Heart left ventricle (tissue), 16 donors: ENCODE measurements at regions of chr16 and their contacts with region 1.

Region 1: GRCh38 chr16:24555346-24555877 is 16.0 kb downstream of the RBBP6 start:
- DNase-seq: no peak
- ATAC-seq: no peak
- H3K4me3 ChIP-seq: no peak overlapping the region
- H3K27ac ChIP-seq: no peak overlapping the region
- H3K4me1 ChIP-seq: peaks cover 0 to 22% (median 7%) of the 10 kb centered on the region in 12 donors
- H3K27me3 ChIP-seq: no peaks in the 10 kb centered on the region
- CTCF ChIP-seq: no peak
- POLR2A ChIP-seq: no peak

Region 2: DNA sequence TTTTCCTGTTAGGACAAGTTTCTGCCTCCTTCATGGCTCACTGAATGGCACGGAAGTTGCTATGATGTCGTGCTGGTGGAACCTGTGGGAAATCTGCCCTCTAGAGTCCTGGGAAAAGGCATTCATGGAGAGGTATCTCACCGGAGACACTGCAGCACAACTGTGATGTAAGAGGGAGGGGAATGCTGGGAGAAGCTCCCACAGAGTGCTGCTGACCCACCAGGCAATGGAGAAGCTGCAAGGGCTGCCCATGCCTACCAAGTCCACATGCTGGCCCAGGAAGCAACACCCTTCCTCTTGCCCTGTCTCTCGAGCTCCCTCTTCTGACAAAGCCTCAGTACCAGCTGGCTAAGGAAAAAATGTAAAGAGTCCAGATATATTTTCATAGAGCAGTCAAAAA is 245.2 kb after region 1 on chr16:
- intact Hi-C with region 1: loop called in 3 of 10 experiments (anchors 5 to 10 kb)
- DNase-seq: no peak
- ATAC-seq: peak; percentile 21 to 60 (median 56)
- H3K4me3 ChIP-seq: no peak overlapping the region
- H3K27ac ChIP-seq: no peak overlapping the region
- H3K4me1 ChIP-seq: no peaks in the 10 kb centered on the region
- H3K27me3 ChIP-seq: no peaks in the 10 kb centered on the region
- CTCF ChIP-seq: peak in 7 of 12 donors; percentile 6 to 44 (median 25)
- POLR2A ChIP-seq: no peak

Region 3: DNA sequence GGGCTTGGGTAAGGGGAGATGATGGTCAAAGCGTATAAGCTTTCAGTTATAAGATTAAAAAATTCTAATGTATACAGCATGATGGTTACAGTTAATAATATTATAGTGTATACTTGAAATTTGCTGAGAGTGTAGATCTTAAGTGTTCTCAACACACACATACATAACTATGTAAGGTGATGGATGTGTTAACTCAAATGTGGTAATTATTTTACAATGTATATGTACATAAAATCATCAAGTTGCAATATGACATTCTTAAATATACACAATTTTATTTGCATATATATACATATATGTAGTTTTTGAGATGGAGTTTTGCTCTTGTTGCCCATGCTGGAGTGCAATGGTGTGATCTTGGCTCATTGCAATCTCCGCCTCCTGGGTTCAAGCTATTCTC is 695.1 kb after region 1 on chr16:
- intact Hi-C with region 1: loop called in 1 of 10 experiments (anchors 5 kb)
- DNase-seq: no peak
- ATAC-seq: no peak
- H3K4me3 ChIP-seq: no peak overlapping the region
- H3K27ac ChIP-seq: no peak overlapping the region
- H3K4me1 ChIP-seq: peaks cover 0 to 4% (median under 1%) of the 10 kb centered on the region in 12 donors
- H3K27me3 ChIP-seq: no peaks in the 10 kb centered on the region
- CTCF ChIP-seq: no peak
- POLR2A ChIP-seq: no peak